Natural killer cell (primary cell): ENCODE measurements at regions of chr3 and their contacts with region 1.

Region 1: DNA sequence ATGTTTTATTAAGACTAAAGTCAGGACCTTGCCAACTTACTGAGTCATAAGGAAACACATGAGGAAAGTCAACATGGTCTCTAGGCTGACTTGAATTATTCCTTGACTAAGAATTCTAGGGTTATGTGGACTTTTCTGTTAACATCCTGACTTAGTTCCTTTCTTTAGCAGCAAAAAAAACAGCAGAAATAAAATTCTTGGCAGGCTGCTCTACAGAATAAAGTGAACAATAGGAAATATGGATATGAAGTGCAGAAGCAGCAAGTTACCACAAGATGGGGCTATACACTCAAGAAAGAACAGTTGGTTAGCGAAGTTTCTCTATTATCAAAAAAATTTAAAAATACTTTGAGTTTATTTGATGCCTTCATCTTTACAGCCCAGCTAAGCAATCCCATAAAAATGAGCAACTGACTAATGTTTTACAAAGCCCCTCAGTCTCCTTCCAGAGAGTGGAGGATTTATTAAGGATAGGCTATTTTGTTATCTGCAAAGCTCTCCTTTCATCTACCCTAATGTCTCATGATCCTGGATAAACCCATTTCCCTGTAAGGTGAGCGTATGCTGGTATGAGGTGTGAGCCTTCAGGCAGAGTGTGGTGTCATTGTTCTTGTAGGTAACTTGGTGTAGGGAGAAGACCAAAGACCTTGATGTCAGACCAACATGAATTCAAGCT is 23.1 kb upstream of the MCCC1 start:
- DNase-seq: peak in 1 of 2 donors; percentile 73
- ATAC-seq: peak; percentile 68 to 73 (median 69)
- H3K4me3 ChIP-seq: no peak overlapping the region
- H3K4me3 Mint-ChIP-seq: no peak overlapping the region
- H3K27ac ChIP-seq: no peak overlapping the region
- H3K27ac Mint-ChIP-seq: no peak overlapping the region
- H3K4me1 ChIP-seq: no peaks in the 10 kb centered on the region
- H3K4me1 Mint-ChIP-seq: no peaks in the 10 kb centered on the region
- H3K27me3 ChIP-seq: peaks cover 2% of the 10 kb centered on the region
- H3K27me3 Mint-ChIP-seq: peaks cover 3 to 4% of the 10 kb centered on the region in 2 donors
- CTCF ChIP-seq: peak; percentile 85

Region 2: DNA sequence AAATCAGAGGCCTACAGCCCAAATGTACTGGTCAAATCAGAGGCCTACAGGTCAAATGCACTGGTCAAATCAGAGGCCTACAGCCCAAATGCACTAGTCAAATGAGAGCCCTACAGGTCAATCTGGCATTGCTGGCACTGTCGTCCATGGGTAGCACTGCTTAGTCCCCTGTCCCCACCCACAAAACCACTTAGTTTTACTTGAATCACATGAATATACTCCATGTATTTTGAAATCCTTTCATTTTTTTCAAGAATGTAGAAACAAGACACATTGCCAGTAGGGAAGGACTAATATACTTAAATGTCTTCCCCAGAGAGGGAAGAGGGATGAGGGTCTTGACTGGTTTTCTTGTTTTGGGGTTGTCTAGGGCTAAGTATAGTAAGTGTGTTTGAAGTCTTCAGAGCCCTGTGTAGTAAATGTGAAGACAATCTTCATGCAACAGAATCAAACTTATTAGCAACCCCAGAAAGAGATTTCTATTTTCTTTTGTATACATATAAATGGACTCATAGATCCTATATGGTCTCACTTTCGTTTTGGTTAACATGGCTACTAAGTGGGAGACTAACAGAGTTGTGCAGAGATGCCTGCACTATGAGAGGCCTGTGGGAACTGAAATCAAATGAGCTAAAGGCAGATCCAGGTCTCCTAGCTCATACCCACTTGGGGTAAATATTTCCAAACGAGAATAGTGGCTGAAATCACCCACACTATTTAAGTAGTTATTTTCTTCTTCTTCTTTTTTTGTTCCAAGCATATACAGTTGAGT is 103.8 kb before region 1 on chr3:
- intact Hi-C with region 1: no loop called
- DNase-seq: peak in 1 of 2 donors; percentile 4
- ATAC-seq: peak in 1 of 3 donors; percentile 7
- H3K4me3 ChIP-seq: no peak overlapping the region
- H3K4me3 Mint-ChIP-seq: no peak overlapping the region
- H3K27ac ChIP-seq: no peak overlapping the region
- H3K27ac Mint-ChIP-seq: no peak overlapping the region
- H3K4me1 ChIP-seq: no peaks in the 10 kb centered on the region
- H3K4me1 Mint-ChIP-seq: no peaks in the 10 kb centered on the region
- H3K27me3 ChIP-seq: no peaks in the 10 kb centered on the region
- H3K27me3 Mint-ChIP-seq: no peaks in the 10 kb centered on the region
- CTCF ChIP-seq: no peak

Region 3: DNA sequence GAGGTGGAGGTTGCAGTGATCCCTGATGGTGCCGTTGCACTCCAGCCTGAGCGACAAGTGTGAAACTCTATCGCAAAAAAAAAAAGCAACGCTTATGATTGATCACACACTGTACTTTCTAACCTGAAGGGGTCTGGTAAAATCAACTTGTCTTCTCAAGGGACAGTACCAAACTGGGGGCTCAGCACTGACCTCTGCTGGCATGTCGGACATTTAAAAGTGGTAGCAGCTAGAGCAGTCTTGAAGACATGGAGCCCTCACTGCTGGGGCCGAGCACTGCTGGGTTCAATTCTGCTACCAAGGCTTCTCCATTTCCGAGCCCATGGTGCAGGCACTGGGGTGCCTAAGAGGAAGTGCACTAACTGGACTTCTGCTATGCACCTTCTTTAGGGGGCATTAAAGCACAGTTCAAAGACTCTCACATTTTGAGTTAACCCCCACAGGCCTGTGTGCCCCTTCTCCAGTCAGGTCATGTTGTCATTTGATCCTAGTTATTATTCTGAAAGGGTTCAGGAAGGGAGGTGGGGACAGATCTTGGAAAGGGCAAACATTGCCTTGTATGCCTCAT is 66.6 kb after region 1 on chr3:
- intact Hi-C with region 1: loop called (anchors 5 kb)
- DNase-seq: peak in 1 of 2 donors; percentile 46
- ATAC-seq: peak; percentile 49 to 61 (median 55)
- H3K4me3 ChIP-seq: no peak overlapping the region
- H3K4me3 Mint-ChIP-seq: no peak overlapping the region
- H3K27ac ChIP-seq: no peak overlapping the region
- H3K27ac Mint-ChIP-seq: no peak overlapping the region
- H3K4me1 ChIP-seq: no peaks in the 10 kb centered on the region
- H3K4me1 Mint-ChIP-seq: no peaks in the 10 kb centered on the region
- H3K27me3 ChIP-seq: no peaks in the 10 kb centered on the region
- H3K27me3 Mint-ChIP-seq: peaks cover 0 to 3% of the 10 kb centered on the region in 2 donors
- CTCF ChIP-seq: peak; percentile 25

Region 4: GRCh38 chr3:183766745-183767606 is 644.6 kb after region 1 on chr3:
- intact Hi-C with region 1: loop called (anchors 5 kb)
- DNase-seq: peak; percentile 49 to 86
- ATAC-seq: peak; percentile 89 to 95 (median 91)
- H3K4me3 ChIP-seq: no peak overlapping the region
- H3K4me3 Mint-ChIP-seq: no peak overlapping the region
- H3K27ac ChIP-seq: no peak overlapping the region
- H3K27ac Mint-ChIP-seq: peak overlapping the region; percentile 13 to 27
- H3K4me1 ChIP-seq: no peaks in the 10 kb centered on the region
- H3K4me1 Mint-ChIP-seq: peaks cover 6% of the 10 kb centered on the region in 2 donors
- H3K27me3 ChIP-seq: no peaks in the 10 kb centered on the region
- H3K27me3 Mint-ChIP-seq: no peaks in the 10 kb centered on the region
- CTCF ChIP-seq: peak; percentile 78